PC-9 (cell line): ENCODE measurements at regions of chr12 and their contacts with region 1.

Region 1: GRCh38 chr12:15956413-15957185 is 45.5 kb downstream of the DERA start:
- DNase-seq: peak; percentile 66 to 98
- H3K4me3 ChIP-seq: peak overlapping the region; percentile 22; the same call in 1 of the 2 replicates
- H3K27ac ChIP-seq: peak overlapping the region; percentile 93
- H3K4me1 ChIP-seq: peaks cover 33% of the 10 kb centered on the region
- H3K27me3 ChIP-seq: no peaks in the 10 kb centered on the region
- CTCF ChIP-seq: no peak

Region 2: GRCh38 chr12:15910864-15911721 is 45.5 kb before region 1 on chr12 and contains the start of gene DERA:
- CTCF ChIA-PET with region 1: no interaction called
- POLR2A ChIA-PET with region 1: no interaction called
- intact Hi-C with region 1: loop called (anchors 1 kb)
- DNase-seq: peak; percentile 64 to 92
- H3K4me3 ChIP-seq: peak within 1 kb of the TSS; percentile 80
- H3K27ac ChIP-seq: peak within 1 kb of the TSS; percentile 82
- H3K4me1 ChIP-seq: peaks cover 17% of the 10 kb centered on the region
- H3K27me3 ChIP-seq: no peaks in the 10 kb centered on the region
- CTCF ChIP-seq: 0 out of 2 replicates have a peak, but pooled peaks have one; percentile 19
- total RNA-seq, gene DERA: 67.3 and 67.6 TPM in 2 replicates